ENCODE measurements at regions of chr3 and their contacts with region 1.

Region 1: DNA sequence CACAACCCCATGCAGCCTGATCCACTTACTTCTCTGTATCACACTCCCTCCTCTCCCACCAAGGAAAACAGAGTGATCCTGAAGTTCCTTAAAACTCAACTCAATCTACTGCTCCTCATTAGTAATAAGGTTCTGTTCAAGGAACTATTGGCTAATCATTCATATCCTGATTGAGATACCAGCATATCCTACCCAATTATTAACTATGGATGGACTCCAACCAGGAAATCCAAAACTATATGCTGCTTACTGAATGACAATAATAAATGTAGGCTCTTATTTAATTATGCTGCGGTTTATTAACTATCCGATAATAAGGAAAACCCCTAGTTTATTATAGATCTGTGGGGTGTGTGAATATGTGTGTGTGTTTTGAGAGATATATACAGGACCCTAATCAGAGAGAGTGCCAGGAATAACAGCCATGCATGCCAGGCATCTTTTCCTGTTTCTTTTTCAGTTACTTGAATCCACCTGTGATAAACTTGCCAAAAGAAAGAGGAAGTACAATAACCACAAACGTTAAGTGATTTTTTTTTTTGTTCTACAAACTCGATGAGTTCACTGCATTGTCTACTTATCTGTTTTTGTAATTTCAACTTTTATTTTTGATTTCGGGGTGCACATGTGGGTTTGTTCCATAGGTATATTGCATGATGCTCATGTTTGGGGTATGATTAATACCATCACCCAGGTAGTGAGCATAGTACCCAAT is 1031.7 kb upstream of the CFAP20DC start:
- DNase-seq: no peak
- H3K4me3 Mint-ChIP-seq: peak overlapping the region; percentile 79
- H3K27ac Mint-ChIP-seq: peak overlapping the region; percentile 95
- H3K4me1 Mint-ChIP-seq: peaks cover 87% of the 10 kb centered on the region
- H3K27me3 Mint-ChIP-seq: no peaks in the 10 kb centered on the region

Region 2: GRCh38 chr3:59559721-59560435 is 521.7 kb before region 1 on chr3:
- intact Hi-C with region 1: loop called (anchors 1 kb)
- DNase-seq: no peak
- H3K4me3 Mint-ChIP-seq: no peak overlapping the region
- H3K27ac Mint-ChIP-seq: peak overlapping the region; percentile 88
- H3K4me1 Mint-ChIP-seq: peaks cover 24% of the 10 kb centered on the region
- H3K27me3 Mint-ChIP-seq: no peaks in the 10 kb centered on the region

Region 3: GRCh38 chr3:59935025-59935424 is 146.5 kb before region 1 on chr3:
- intact Hi-C with region 1: loop called (anchors 1 kb)
- DNase-seq: peak; percentile 6
- H3K4me3 Mint-ChIP-seq: peak overlapping the region; percentile 54
- H3K27ac Mint-ChIP-seq: peak overlapping the region; percentile 82
- H3K4me1 Mint-ChIP-seq: peaks cover 43% of the 10 kb centered on the region
- H3K27me3 Mint-ChIP-seq: no peaks in the 10 kb centered on the region

Region 4: DNA sequence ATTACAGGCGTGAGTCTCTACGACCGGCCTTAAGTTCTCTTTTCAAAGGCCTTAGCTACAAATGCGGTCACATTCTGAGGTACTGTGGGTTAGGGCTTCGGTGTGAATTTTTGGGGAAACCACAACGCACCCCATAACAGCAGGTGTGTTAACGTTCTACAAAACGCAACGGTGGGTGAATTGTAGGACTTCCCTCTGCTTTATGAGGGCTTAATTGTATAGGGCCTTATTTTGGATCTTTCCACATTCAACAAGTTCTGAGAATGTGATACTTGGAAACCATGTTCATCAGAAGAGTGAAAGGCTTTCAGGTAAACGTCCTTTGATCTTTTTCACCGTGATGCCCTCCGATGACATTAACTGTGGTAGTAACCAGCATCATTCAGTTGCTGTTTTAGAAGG is 33.1 kb before region 1 on chr3:
- intact Hi-C with region 1: loop called (anchors 1 kb)
- DNase-seq: peak; percentile 62
- H3K4me3 Mint-ChIP-seq: peak overlapping the region; percentile 74
- H3K27ac Mint-ChIP-seq: peak overlapping the region; percentile 93
- H3K4me1 Mint-ChIP-seq: peaks cover 88% of the 10 kb centered on the region
- H3K27me3 Mint-ChIP-seq: no peaks in the 10 kb centered on the region

Region 5: GRCh38 chr3:60192297-60193114 is 111.0 kb after region 1 on chr3:
- intact Hi-C with region 1: loop called (anchors 1 kb)
- DNase-seq: no peak
- H3K4me3 Mint-ChIP-seq: peak overlapping the region; percentile 62
- H3K27ac Mint-ChIP-seq: peak overlapping the region; percentile 94
- H3K4me1 Mint-ChIP-seq: peaks cover 58% of the 10 kb centered on the region
- H3K27me3 Mint-ChIP-seq: no peaks in the 10 kb centered on the region

Region 6: GRCh38 chr3:61371123-61371522 is 1289.6 kb after region 1 on chr3:
- intact Hi-C with region 1: loop called (anchors 10 kb)
- DNase-seq: no peak
- H3K4me3 Mint-ChIP-seq: no peak overlapping the region
- H3K27ac Mint-ChIP-seq: no peak overlapping the region
- H3K4me1 Mint-ChIP-seq: no peaks in the 10 kb centered on the region
- H3K27me3 Mint-ChIP-seq: peaks cover 2% of the 10 kb centered on the region

Measured in activated T-helper 1 cell treated with anti-CD3 and anti-CD28 coated beads, Interleukin-12 subunit alpha, Interleukin-12 subunit beta, Interleukin-2, Interleukin-4 antibody, amounts not matched to agents 30 ng/mL and 10 ng/mL and 1 ng/mL, durations not matched to agents 14 hours and 24 hours and 36 hours (primary cell).